CD4-positive, alpha-beta T cell (primary cell): ENCODE measurements at regions of chr1 and their contacts with region 1.

Region 1: GRCh38 chr1:165928075-165928731 is 100.8 kb downstream of the UCK2 start:
- DNase-seq: peak in 12 of 14 experiments; percentile 9 to 75 (median 22)
- ATAC-seq: peak; percentile 61
- H3K4me3 ChIP-seq: no peak overlapping the region
- H3K4me3 Mint-ChIP-seq: no peak overlapping the region
- H3K27ac ChIP-seq: no peak overlapping the region
- H3K27ac Mint-ChIP-seq: no peak overlapping the region
- H3K4me1 ChIP-seq: no peaks in the 10 kb centered on the region
- H3K4me1 Mint-ChIP-seq: no peaks in the 10 kb centered on the region
- H3K27me3 ChIP-seq: peaks cover 0 to 3% of the 10 kb centered on the region in 2 experiments
- H3K27me3 Mint-ChIP-seq: peaks cover 40% of the 10 kb centered on the region
- CTCF ChIP-seq: peak; percentile 61

Region 2: DNA sequence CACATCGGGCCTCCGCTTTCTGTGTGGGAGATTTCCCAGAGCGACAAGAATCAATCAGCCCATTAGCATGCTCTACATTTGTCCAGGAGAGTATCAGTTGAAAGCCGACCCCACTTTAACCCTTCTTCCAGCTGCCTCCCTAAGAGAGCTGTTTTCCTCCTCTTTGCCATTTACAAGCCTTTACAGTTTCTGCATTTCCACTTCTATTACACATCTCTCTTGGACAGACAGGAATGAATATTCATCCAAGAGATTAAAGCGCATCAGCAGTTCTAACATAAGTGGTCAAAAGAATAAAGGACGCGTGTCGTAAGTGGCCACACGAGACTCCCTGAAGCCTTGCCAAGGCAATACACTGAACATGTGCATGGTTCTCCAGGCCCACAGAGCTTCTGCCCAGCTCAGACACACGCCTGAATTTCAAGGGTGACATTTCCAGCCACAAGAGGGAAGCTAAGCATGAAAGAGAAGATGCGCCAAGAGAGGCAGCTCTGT is 191.3 kb after region 1 on chr1:
- CTCF ChIA-PET with region 1: no interaction called
- POLR2A ChIA-PET with region 1: no interaction called
- intact Hi-C with region 1: no loop called
- DNase-seq: no peak
- ATAC-seq: no peak
- H3K4me3 ChIP-seq: no peak overlapping the region
- H3K4me3 Mint-ChIP-seq: no peak overlapping the region
- H3K27ac ChIP-seq: no peak overlapping the region
- H3K27ac Mint-ChIP-seq: no peak overlapping the region
- H3K4me1 ChIP-seq: no peaks in the 10 kb centered on the region
- H3K4me1 Mint-ChIP-seq: no peaks in the 10 kb centered on the region
- H3K27me3 ChIP-seq: no peaks in the 10 kb centered on the region
- H3K27me3 Mint-ChIP-seq: no peaks in the 10 kb centered on the region
- CTCF ChIP-seq: no peak

Region 3: GRCh38 chr1:166432655-166433054 is 504.5 kb after region 1 on chr1:
- CTCF ChIA-PET with region 1: no interaction called
- POLR2A ChIA-PET with region 1: interaction called, 3 read pairs
- intact Hi-C with region 1: loop called in 1 of 2 experiments (anchors 5 kb)
- DNase-seq: no peak
- ATAC-seq: no peak
- H3K4me3 ChIP-seq: no peak overlapping the region
- H3K4me3 Mint-ChIP-seq: no peak overlapping the region
- H3K27ac ChIP-seq: no peak overlapping the region
- H3K27ac Mint-ChIP-seq: no peak overlapping the region
- H3K4me1 ChIP-seq: no peaks in the 10 kb centered on the region
- H3K4me1 Mint-ChIP-seq: no peaks in the 10 kb centered on the region
- H3K27me3 ChIP-seq: peaks cover 0 to 9% of the 10 kb centered on the region in 2 experiments
- H3K27me3 Mint-ChIP-seq: peaks cover 17% of the 10 kb centered on the region
- CTCF ChIP-seq: no peak

Region 4: DNA sequence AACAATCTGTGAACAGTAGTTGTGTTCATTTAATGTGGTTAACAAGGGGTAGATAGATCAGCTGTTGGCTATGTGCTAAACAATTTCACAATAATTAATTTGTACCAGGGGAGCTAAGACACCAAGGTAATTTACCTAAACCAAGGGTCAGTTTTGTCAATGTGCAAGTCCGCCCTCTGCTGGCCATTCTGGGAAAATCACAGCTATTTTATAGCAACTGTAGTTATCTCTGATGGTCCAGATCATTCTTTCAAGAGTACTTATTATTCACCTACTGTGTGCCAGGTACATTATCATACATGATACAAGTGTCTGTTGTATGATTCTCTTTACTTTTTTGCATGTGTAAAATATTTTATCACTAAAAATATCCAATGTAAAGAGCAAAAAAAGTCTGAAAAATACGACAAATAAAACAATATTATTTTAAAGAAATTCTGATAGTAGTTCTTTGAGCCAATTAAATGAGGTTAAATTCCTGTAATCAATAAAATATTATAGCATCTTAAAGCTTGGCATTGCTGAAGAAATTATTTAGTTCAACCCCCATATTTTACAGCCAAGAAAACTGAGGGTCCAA is 550.9 kb after region 1 on chr1:
- CTCF ChIA-PET with region 1: interaction called, 7 read pairs
- POLR2A ChIA-PET with region 1: no interaction called
- intact Hi-C with region 1: loop called (anchors 2 kb)
- DNase-seq: peak in 12 of 14 experiments; percentile 12 to 72 (median 44)
- ATAC-seq: peak; percentile 29
- H3K4me3 ChIP-seq: no peak overlapping the region
- H3K4me3 Mint-ChIP-seq: no peak overlapping the region
- H3K27ac ChIP-seq: no peak overlapping the region
- H3K27ac Mint-ChIP-seq: no peak overlapping the region
- H3K4me1 ChIP-seq: no peaks in the 10 kb centered on the region
- H3K4me1 Mint-ChIP-seq: no peaks in the 10 kb centered on the region
- H3K27me3 ChIP-seq: no peaks in the 10 kb centered on the region
- H3K27me3 Mint-ChIP-seq: no peaks in the 10 kb centered on the region
- CTCF ChIP-seq: peak; percentile 89

Region 5: DNA sequence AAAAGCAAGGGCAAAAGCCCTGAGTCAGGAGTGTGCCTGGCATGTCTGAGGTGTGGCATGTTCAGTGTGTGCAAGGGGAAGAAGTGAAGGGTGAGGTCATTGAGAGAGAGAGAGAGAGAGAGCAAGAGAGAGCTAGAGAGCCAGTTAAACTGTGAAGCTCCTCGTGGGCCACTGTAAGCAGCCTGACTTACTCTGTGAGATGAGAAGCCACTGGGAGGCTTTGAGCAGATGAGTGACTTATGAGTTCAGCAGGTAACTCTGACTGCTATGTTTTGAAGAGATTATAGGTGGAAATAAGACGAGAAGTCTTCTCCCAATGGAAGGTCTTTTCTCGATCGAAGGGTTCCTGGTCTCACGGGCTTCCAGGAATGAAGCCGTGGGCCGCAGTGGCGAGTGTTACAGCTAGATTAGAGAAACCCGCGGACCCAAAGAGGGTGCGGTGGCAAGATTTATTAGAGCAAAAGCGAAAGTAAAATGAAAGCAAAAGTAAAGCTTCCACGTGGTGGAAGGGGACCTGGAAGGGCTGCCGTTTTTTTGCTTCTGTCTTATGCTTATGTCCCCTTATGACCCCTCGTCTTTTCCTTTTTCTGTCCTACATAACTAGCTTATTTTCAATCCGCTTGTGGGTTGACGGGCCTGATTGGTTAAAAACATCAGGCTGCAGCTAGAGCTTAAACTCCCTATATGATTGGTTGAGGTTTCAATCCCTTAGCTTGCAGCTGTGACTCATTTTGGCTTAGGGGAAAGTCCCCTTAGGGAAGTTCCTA is 561.6 kb after region 1 on chr1:
- CTCF ChIA-PET with region 1: no interaction called
- POLR2A ChIA-PET with region 1: no interaction called
- intact Hi-C with region 1: loop called in 1 of 2 experiments (anchors 2 kb)
- DNase-seq: peak; percentile 6 to 85 (median 32)
- ATAC-seq: peak; percentile 88
- H3K4me3 ChIP-seq: peak overlapping the region; percentile 66
- H3K4me3 Mint-ChIP-seq: no peak overlapping the region
- H3K27ac ChIP-seq: peak overlapping the region; percentile 71 to 91
- H3K27ac Mint-ChIP-seq: no peak overlapping the region
- H3K4me1 ChIP-seq: peaks cover 21% of the 10 kb centered on the region
- H3K4me1 Mint-ChIP-seq: no peaks in the 10 kb centered on the region
- H3K27me3 ChIP-seq: no peaks in the 10 kb centered on the region
- H3K27me3 Mint-ChIP-seq: no peaks in the 10 kb centered on the region
- CTCF ChIP-seq: no peak

Region 6: DNA sequence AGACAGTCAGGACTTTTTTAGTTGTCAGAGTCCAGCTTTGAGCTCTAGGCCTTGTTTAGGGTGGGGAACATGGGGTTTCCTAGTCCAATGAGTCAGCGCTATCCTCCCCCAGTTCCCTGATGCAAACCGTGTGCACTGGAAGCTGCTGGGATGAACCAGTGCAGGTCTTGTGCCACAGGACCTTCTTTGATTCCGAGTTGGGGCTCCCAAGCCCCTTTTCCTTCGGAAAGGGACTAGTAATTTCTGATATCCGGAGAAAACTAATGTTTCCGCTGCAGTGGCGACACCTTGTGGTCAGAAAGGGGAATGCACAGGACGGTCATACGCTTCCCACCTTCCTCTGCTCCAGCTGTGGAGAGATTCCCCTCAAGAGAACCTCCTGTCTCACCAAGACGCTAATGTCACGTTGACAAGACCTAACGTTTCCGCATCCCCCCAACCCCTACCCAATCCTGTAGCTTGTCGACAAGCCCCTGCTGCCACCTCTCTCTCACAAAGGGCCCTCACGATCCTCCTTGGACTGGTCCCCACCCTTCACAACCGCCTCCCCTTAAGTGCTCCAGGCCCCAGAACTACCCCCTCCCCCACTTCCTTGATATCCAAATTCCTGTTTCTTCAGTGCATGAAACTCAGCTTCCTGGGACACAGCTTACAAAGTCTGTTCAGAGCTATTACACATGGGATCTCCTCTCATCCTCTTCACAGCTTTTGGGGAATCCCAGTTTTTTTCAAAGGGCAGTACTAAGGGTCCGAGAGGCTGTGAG is 1131.0 kb after region 1 on chr1:
- CTCF ChIA-PET with region 1: no interaction called
- POLR2A ChIA-PET with region 1: no interaction called
- intact Hi-C with region 1: loop called in 1 of 2 experiments (anchors 5 kb)
- DNase-seq: peak; percentile 58 to 83 (median 66)
- ATAC-seq: peak; percentile 69
- H3K4me3 ChIP-seq: no peak overlapping the region
- H3K4me3 Mint-ChIP-seq: no peak overlapping the region
- H3K27ac ChIP-seq: no peak overlapping the region
- H3K27ac Mint-ChIP-seq: no peak overlapping the region
- H3K4me1 ChIP-seq: peaks cover 4% of the 10 kb centered on the region
- H3K4me1 Mint-ChIP-seq: peaks cover 9% of the 10 kb centered on the region
- H3K27me3 ChIP-seq: no peaks in the 10 kb centered on the region
- H3K27me3 Mint-ChIP-seq: no peaks in the 10 kb centered on the region
- CTCF ChIP-seq: peak; percentile 97